Left ventricle myocardium inferior (tissue), 1 donor: ENCODE measurements at regions of chr19 and their contacts with region 1.

Region 1: GRCh38 chr19:47296036-47296435 is 13.6 kb upstream of the C5AR1 start:
- DNase-seq: no peak
- H3K4me3 ChIP-seq: no peak overlapping the region
- H3K27ac ChIP-seq: no peak overlapping the region
- H3K4me1 ChIP-seq: no peaks in the 10 kb centered on the region
- H3K27me3 ChIP-seq: no peaks in the 10 kb centered on the region
- CTCF ChIP-seq: peak; percentile 79

Region 2: DNA sequence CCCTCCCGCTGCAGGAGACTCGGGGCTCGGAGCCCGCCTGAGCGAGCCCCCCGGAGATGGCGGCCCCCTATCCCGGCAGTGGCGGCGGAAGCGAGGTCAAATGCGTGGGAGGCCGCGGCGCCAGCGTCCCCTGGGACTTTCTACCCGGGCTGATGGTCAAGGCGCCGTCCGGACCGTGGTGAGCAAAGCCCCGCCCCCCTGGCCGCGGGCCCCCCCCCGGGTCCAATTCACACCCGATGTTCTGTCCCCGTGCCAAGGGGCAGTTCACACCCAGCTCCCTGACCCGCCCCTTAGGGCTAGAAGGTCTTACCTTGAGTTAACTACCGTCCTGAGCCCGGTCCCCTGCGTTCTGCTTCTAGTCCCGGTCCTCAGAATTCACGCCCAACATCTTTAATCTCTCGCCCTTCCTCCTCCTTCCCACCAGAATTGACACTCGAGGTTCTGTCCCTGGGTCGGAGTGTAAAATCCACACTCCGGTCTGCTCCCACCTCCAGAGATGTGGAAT is 275.0 kb before region 1 on chr19:
- intact Hi-C with region 1: no loop called
- DNase-seq: no peak
- H3K4me3 ChIP-seq: peak overlapping the region; percentile 60
- H3K27ac ChIP-seq: no peak overlapping the region
- H3K4me1 ChIP-seq: peaks cover 35% of the 10 kb centered on the region
- H3K27me3 ChIP-seq: peaks cover 73% of the 10 kb centered on the region
- CTCF ChIP-seq: no peak

Region 3: DNA sequence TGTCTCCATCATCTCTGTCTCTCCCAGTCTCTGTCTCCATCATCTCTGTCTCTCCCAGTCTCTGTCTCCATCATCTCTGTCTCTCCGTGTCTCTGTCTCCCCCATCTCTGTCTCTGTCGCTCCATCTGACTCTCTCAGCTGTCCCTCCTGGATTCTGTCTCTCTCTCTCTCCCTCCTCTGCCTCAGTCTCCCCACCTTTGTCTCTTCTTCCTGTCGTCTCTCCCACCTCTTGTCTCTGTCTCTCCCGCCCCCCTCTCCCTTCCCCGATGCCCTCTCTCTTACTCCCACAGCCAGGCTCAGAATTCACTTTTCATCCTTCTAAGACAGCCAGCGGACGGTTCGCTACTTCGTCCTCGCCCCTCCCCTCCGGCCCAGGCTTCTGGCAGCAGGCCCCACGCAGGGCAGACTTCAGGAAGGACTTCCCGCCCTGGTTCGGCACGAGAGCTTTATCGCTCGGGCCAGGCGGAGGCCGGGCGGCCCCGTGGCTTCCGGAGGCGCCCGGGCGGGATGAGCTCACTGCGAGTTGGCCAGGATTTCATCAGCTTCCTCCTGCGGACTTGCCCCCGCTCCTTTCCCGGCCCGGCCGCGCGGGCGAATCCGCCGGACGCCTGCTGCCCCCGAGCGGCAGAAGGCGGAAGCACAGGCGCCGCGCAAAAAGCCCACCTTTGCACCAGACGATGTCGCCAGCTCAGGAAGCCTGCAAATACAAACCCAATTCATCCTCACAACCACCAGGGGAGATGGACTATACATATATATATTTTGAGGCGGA is 52.1 kb before region 1 on chr19:
- intact Hi-C with region 1: no loop called
- DNase-seq: peak; percentile 92
- H3K4me3 ChIP-seq: peak overlapping the region; percentile 58
- H3K27ac ChIP-seq: peak overlapping the region; percentile 70
- H3K4me1 ChIP-seq: peaks cover 58% of the 10 kb centered on the region
- H3K27me3 ChIP-seq: peaks cover 22% of the 10 kb centered on the region
- CTCF ChIP-seq: peak; percentile 98

Region 4: GRCh38 chr19:47391510-47392223 is 95.6 kb after region 1 on chr19:
- intact Hi-C with region 1: loop called (anchors 10 kb)
- DNase-seq: peak; percentile 71
- H3K4me3 ChIP-seq: no peak overlapping the region
- H3K27ac ChIP-seq: no peak overlapping the region
- H3K4me1 ChIP-seq: no peaks in the 10 kb centered on the region
- H3K27me3 ChIP-seq: peaks cover 53% of the 10 kb centered on the region
- CTCF ChIP-seq: peak; percentile 92

Region 5: GRCh38 chr19:47428177-47428894 is 132.3 kb after region 1 on chr19:
- intact Hi-C with region 1: loop called (anchors 10 kb)
- DNase-seq: peak; percentile 85
- H3K4me3 ChIP-seq: peak overlapping the region; percentile 8
- H3K27ac ChIP-seq: no peak overlapping the region
- H3K4me1 ChIP-seq: peaks cover 28% of the 10 kb centered on the region
- H3K27me3 ChIP-seq: peaks cover 99% of the 10 kb centered on the region
- CTCF ChIP-seq: no peak